ENCODE measurements at regions of chr14 and their contacts with region 1.

Region 1: DNA sequence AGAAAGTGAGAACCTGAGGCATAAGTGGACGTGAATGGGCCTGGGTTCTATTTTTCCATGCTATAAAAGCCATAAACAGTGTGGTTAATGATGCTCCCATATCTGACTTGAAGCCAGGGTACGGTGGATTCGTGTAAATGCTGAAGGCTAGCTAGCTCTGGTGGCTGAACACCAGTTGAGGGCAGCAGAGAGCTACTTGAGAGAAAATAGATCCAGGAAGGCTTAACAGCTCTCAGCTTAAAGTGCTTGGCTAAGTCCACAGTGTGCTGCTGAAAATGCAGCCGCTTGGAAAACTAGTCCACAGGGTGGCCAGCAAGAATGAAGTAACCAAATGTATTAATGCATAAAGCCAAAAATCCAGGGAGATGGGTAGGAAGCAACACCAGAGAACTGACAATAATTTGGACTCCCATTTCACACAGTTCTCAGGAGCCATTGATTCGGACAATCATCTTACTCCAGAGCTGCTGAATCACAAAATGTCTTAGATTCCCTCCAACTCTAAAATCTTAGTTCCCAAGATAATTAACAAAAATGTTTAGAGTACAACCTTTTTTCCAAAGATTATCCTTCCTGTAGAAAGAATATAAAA is 15.0 kb upstream of the FOXG1 start:
- DNase-seq: peak; percentile 7
- ATAC-seq: peak; percentile 90
- H3K4me3 ChIP-seq: no peak overlapping the region
- H3K27ac ChIP-seq: no peak overlapping the region
- H3K4me1 ChIP-seq: no peaks in the 10 kb centered on the region
- H3K27me3 ChIP-seq: peaks cover 0 to 3% of the 10 kb centered on the region in 2 experiments; a peak in 1 of 4 replicates
- CTCF ChIP-seq: peak; percentile 74 to 76 (median 75)
- EP300 ChIP-seq: no peak
- POLR2A ChIP-seq: no peak
- RAD21 ChIP-seq: peak; percentile 66

Region 2: GRCh38 chr14:29222671-29223268 is 471.2 kb after region 1 on chr14:
- CTCF ChIA-PET with region 1: interaction called, 7 read pairs
- POLR2A ChIA-PET with region 1: no interaction called
- RAD21 ChIA-PET with region 1: no interaction called
- SMC1A ChIA-PET with region 1: no interaction called
- in situ Hi-C with region 1: loop called (anchors 25 kb)
- intact Hi-C with region 1: loop called (anchors 2 kb)
- DNase-seq: no peak
- ATAC-seq: no peak
- H3K4me3 ChIP-seq: no peak overlapping the region
- H3K27ac ChIP-seq: no peak overlapping the region
- H3K4me1 ChIP-seq: no peaks in the 10 kb centered on the region
- H3K27me3 ChIP-seq: no peaks in the 10 kb centered on the region
- CTCF ChIP-seq: peak; percentile 31 to 42 (median 41); a peak in 5 of 6 replicates
- EP300 ChIP-seq: no peak
- POLR2A ChIP-seq: no peak
- RAD21 ChIP-seq: peak; percentile 48

Region 3: GRCh38 chr14:30005114-30005808 is 1253.7 kb after region 1 on chr14:
- CTCF ChIA-PET with region 1: no interaction called
- POLR2A ChIA-PET with region 1: no interaction called
- RAD21 ChIA-PET with region 1: no interaction called
- SMC1A ChIA-PET with region 1: no interaction called
- in situ Hi-C with region 1: no loop called
- intact Hi-C with region 1: loop called (anchors 10 kb)
- DNase-seq: no peak
- ATAC-seq: peak; percentile 55
- H3K4me3 ChIP-seq: no peak overlapping the region
- H3K27ac ChIP-seq: no peak overlapping the region
- H3K4me1 ChIP-seq: no peaks in the 10 kb centered on the region
- H3K27me3 ChIP-seq: no peaks in the 10 kb centered on the region
- CTCF ChIP-seq: peak; percentile 41 to 48 (median 45); a peak in 5 of 6 replicates
- EP300 ChIP-seq: no peak
- POLR2A ChIP-seq: no peak
- RAD21 ChIP-seq: peak; percentile 66

Region 4: GRCh38 chr14:30443368-30444007 is 1691.9 kb after region 1 on chr14:
- CTCF ChIA-PET with region 1: interaction called, 5 read pairs
- POLR2A ChIA-PET with region 1: no interaction called
- RAD21 ChIA-PET with region 1: no interaction called
- SMC1A ChIA-PET with region 1: interaction called, 3 read pairs
- in situ Hi-C with region 1: loop called (anchors 25 kb)
- intact Hi-C with region 1: loop called (anchors 1 kb)
- DNase-seq: no peak
- ATAC-seq: peak; percentile 57; the same call in 1 of the 3 replicates
- H3K4me3 ChIP-seq: no peak overlapping the region
- H3K27ac ChIP-seq: no peak overlapping the region
- H3K4me1 ChIP-seq: no peaks in the 10 kb centered on the region
- H3K27me3 ChIP-seq: no peaks in the 10 kb centered on the region
- CTCF ChIP-seq: peak; percentile 32 to 71 (median 45); a peak in 5 of 6 replicates
- EP300 ChIP-seq: no peak
- POLR2A ChIP-seq: no peak
- RAD21 ChIP-seq: peak; percentile 80